Naive thymus-derived CD4-positive, alpha-beta T cell (primary cell): ENCODE measurements at regions of chr1 and their contacts with region 1.

Region 1: DNA sequence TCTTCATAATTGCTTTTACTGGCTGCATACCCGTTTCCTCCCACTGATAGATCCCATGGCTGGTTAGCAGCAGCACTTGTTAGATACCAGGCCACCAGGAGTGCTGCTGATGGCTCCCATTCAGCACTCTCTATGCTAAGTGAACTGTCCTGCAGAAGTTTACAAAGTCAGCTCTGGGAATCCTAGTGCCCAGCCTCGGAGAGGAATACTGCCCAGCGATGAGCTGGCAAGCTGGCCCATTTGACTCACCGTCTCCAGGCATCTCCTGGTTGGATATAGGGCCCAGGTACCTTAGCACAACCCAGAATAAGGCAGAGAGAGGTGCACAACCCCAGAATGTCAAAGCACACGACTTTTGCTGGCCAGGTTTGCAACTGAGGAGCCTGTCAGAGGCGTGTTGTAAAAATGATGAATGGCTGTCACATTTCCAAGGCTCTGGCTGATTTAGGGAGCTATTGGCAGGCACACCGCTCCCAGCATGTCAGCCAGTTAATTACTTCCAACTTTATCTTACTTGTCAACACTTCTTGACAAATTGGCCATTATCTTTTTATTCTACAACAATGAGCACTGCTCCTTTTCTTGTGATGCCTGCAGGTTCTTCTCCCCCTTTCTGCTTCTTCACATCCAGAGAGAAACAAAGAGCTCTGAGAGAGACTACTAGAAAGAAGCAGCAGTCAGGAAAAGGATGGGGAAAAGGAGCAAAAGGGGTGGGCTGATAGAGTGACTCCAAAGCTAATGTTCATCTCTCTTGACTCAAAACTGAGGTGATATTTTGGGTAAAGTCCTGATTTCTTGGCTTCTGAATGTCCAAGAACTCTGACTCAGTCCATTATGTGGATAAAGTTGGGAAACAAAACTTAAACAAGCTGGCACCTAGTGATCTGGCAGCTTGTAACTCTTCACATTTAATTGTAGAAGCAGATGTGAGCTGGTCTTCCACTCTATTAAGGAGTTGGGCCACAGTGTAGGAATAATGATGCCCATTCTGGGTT is 10.8 kb upstream of the ANGPTL7 start:
- DNase-seq: no peak
- ATAC-seq: no peak
- H3K4me3 ChIP-seq: no peak overlapping the region
- H3K4me3 Mint-ChIP-seq: no peak overlapping the region
- H3K27ac ChIP-seq: no peak overlapping the region
- H3K27ac Mint-ChIP-seq: peak overlapping the region in 3 of 9 donors; percentile 4 to 38 (median 20)
- H3K4me1 ChIP-seq: no peaks in the 10 kb centered on the region
- H3K4me1 Mint-ChIP-seq: peaks cover 0 to 1% (median 0%) of the 10 kb centered on the region in 7 donors
- H3K27me3 ChIP-seq: no peaks in the 10 kb centered on the region
- H3K27me3 Mint-ChIP-seq: no peaks in the 10 kb centered on the region

Region 2: DNA sequence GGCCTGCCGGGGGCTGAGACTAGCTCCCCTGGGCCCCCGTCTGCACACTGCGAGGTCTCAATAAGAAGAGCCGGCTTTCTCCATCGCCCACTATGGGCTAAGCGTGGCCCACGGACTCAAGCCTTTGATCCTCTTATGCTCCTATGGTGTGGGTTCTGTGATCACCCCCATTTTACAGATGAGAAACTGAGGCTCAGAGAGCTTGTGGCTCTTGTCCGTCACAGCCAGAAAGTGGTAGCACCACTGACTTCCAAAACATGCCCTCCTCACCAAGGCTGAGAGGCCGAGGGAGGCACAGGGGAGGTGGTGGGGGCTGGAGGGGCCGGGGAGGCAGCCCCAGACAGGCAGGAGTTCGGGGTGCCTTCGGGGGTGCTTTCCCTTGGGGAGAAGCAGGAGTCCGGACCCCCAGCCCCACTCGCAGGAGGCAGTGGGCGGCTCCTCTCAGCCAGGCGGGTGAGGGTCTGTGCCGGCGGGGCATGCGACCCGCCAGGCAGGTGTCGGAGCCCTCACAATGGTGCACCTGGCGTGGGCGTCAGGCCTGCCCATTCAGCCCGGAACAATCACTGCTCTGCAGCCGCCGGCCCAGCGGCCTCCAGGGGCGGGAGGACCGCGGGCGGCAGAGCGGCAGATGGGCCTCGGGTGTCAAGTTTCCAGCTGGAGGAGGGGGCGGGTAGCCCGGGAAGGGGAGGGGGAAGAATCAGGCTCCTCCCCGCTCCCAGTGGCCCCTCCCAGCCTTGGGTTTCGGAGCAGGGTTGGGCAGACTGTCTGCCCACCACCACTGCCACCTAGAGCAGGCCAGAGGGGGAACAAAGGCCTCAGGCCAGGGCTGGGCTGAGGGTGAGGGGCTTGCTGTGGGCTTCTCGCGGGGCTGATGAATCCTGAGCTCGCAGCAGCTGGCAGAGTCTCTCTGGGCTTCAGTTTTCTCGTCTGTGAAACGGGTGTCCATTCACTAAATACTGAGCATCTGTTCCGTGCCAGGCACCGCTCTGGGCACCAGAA is 342.6 kb before region 1 on chr1:
- CTCF ChIA-PET with region 1: no interaction called
- POLR2A ChIA-PET with region 1: no interaction called
- intact Hi-C with region 1: no loop called
- DNase-seq: no peak
- ATAC-seq: no peak
- H3K4me3 ChIP-seq: no peak overlapping the region
- H3K4me3 Mint-ChIP-seq: no peak overlapping the region
- H3K27ac ChIP-seq: no peak overlapping the region
- H3K27ac Mint-ChIP-seq: no peak overlapping the region
- H3K4me1 ChIP-seq: no peaks in the 10 kb centered on the region
- H3K4me1 Mint-ChIP-seq: peaks cover 0 to 6% (median 0%) of the 10 kb centered on the region in 7 donors
- H3K27me3 ChIP-seq: peaks cover 0 to 3% of the 10 kb centered on the region in 2 donors
- H3K27me3 Mint-ChIP-seq: peaks cover 15 to 46% (median 35%) of the 10 kb centered on the region in 5 donors

Region 3: GRCh38 chr1:11114966-11115365 is 63.4 kb before region 1 on chr1:
- CTCF ChIA-PET with region 1: no interaction called
- POLR2A ChIA-PET with region 1: no interaction called
- intact Hi-C with region 1: loop called in 1 of 2 experiments (anchors 10 kb)
- DNase-seq: no peak
- ATAC-seq: no peak
- H3K4me3 ChIP-seq: no peak overlapping the region
- H3K4me3 Mint-ChIP-seq: no peak overlapping the region
- H3K27ac ChIP-seq: no peak overlapping the region
- H3K27ac Mint-ChIP-seq: peak overlapping the region in 2 of 9 donors; percentile 38 to 43
- H3K4me1 ChIP-seq: no peaks in the 10 kb centered on the region
- H3K4me1 Mint-ChIP-seq: no peaks in the 10 kb centered on the region
- H3K27me3 ChIP-seq: no peaks in the 10 kb centered on the region
- H3K27me3 Mint-ChIP-seq: no peaks in the 10 kb centered on the region